ENCODE measurements at regions of chr1 and their contacts with region 1.

Region 1: GRCh38 chr1:147640553-147641165 is 29.7 kb downstream of the ACP6 start:
- H3K4me3 Mint-ChIP-seq: no peak overlapping the region
- H3K27ac Mint-ChIP-seq: peak overlapping the region; percentile 64
- H3K4me1 Mint-ChIP-seq: peaks cover 63% of the 10 kb centered on the region
- H3K27me3 Mint-ChIP-seq: no peaks in the 10 kb centered on the region

Region 2: GRCh38 chr1:147389532-147390524 is 250.8 kb before region 1 on chr1:
- intact Hi-C with region 1: no loop called
- H3K4me3 Mint-ChIP-seq: no peak overlapping the region
- H3K27ac Mint-ChIP-seq: no peak overlapping the region
- H3K4me1 Mint-ChIP-seq: peaks cover 2% of the 10 kb centered on the region
- H3K27me3 Mint-ChIP-seq: peaks cover 1% of the 10 kb centered on the region

Region 3: DNA sequence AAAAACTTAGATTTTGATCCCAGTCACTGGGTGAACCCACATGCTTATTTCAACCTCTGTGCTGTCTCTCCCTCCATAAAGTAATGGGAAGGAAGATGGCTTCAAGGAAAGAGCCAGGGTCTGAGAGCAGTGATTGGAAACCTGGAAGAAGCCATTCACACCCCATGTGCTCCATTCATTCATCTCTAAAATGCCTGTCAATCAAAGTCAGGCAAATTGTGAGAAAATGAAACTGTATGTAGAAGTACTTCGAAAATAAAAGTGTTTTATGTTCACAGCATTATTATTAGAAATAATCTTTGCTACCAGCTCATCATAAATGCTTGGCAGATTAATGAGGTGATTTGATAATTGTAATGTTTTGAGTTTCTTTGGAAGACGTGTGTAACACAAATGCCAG is 31.3 kb before region 1 on chr1:
- intact Hi-C with region 1: loop called (anchors 1 kb)
- H3K4me3 Mint-ChIP-seq: no peak overlapping the region
- H3K27ac Mint-ChIP-seq: no peak overlapping the region
- H3K4me1 Mint-ChIP-seq: peaks cover 10% of the 10 kb centered on the region
- H3K27me3 Mint-ChIP-seq: no peaks in the 10 kb centered on the region

Region 4: DNA sequence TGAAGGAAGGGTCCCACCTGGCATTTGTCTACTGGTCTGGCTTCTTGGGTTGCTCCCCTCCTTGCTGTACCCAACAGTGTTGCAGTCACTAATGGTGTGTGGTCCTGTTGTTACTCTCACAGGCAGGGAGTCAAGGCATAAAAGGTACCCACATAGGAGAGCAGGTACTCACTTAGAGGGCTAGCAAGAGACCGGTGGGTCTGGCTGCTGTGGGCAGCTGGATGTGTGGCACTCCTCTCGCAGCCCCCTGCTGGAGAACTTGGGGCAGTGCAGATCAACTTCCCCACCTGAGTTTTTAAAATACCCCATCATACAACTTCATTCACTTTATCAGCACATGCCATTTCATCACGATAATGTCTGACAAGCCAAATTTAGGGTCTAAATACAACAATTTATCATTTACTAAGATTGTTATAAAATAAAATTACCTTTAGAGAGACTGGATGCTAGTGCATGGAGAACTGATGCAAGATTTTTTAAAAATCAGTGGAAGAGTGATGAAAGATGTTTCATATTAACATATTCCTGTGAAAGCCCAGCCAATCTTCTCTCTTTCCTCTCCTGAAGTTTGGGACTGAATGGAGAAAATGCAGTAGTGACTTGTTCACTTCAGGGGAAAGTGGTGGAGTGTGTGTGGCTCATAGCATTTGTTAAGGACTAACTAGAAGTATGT is 13.1 kb before region 1 on chr1:
- intact Hi-C with region 1: loop called (anchors 2 kb)
- H3K4me3 Mint-ChIP-seq: no peak overlapping the region
- H3K27ac Mint-ChIP-seq: peak overlapping the region; percentile 45
- H3K4me1 Mint-ChIP-seq: peaks cover 76% of the 10 kb centered on the region
- H3K27me3 Mint-ChIP-seq: no peaks in the 10 kb centered on the region

Region 5: GRCh38 chr1:147654549-147654948 is 13.9 kb after region 1 on chr1:
- intact Hi-C with region 1: no loop called
- H3K4me3 Mint-ChIP-seq: no peak overlapping the region
- H3K27ac Mint-ChIP-seq: no peak overlapping the region
- H3K4me1 Mint-ChIP-seq: peaks cover 16% of the 10 kb centered on the region
- H3K27me3 Mint-ChIP-seq: no peaks in the 10 kb centered on the region